Activated naive CD4-positive, alpha-beta T cell treated with anti-CD3 and anti-CD28 coated beads for 36 hours (primary cell): ENCODE measurements at regions of chr4 and their contacts with region 1.

Region 1: GRCh38 chr4:80173401-80173800 is 23.9 kb upstream of the PRDM8 start:
- DNase-seq: peak; percentile 79
- H3K4me3 Mint-ChIP-seq: no peak overlapping the region
- H3K27ac Mint-ChIP-seq: peak overlapping the region; percentile 46
- H3K4me1 Mint-ChIP-seq: peaks cover 51% of the 10 kb centered on the region
- H3K27me3 Mint-ChIP-seq: no peaks in the 10 kb centered on the region

Region 2: GRCh38 chr4:79528241-79528706 is 645.1 kb before region 1 on chr4:
- CTCF ChIA-PET with region 1: no interaction called
- intact Hi-C with region 1: loop called (anchors 5 kb)
- DNase-seq: peak; percentile 14
- H3K4me3 Mint-ChIP-seq: no peak overlapping the region
- H3K27ac Mint-ChIP-seq: no peak overlapping the region
- H3K4me1 Mint-ChIP-seq: peaks cover 11% of the 10 kb centered on the region
- H3K27me3 Mint-ChIP-seq: peaks cover 10% of the 10 kb centered on the region

Region 3: DNA sequence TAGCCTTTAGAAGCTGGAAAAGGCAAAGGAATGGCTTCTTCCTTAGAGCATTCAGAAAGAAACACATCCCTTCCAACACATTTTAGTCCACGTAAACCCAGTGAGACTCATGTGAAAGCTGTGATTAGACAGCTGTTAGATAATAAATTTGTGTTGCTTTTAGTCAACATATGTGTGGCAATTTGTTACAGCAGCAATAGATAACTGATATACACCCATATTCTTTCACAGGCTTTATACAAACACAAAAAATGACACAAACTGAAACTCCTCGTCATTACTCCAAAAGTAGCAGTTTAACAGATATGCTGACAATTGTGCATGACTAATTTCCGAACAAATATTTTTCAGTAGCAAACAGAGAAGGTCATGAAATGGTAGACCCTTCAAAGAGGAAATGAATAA is 165.7 kb before region 1 on chr4:
- CTCF ChIA-PET with region 1: no interaction called
- intact Hi-C with region 1: loop called (anchors 2 kb)
- DNase-seq: no peak
- H3K4me3 Mint-ChIP-seq: no peak overlapping the region
- H3K27ac Mint-ChIP-seq: no peak overlapping the region
- H3K4me1 Mint-ChIP-seq: peaks cover 38% of the 10 kb centered on the region
- H3K27me3 Mint-ChIP-seq: no peaks in the 10 kb centered on the region

Region 4: DNA sequence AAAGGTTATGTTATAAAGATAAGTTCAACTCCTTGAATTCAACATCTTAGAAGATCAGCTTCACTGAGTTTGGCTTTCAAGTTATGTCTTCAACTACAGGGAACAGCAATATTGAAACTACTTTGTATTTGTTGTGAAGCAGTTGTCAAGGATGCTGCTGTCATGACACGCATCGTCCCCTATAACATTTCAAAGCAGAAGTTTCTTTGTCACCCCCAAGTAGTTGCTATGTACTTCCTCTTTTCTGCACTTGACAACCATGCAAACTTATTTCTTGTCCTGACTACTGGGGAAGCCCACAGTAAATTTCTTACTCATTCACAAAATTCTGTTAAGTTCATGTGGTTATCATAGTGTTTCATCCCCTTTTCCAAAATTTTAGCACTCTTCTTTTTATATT is 114.7 kb before region 1 on chr4:
- CTCF ChIA-PET with region 1: no interaction called
- intact Hi-C with region 1: loop called (anchors 1 kb)
- DNase-seq: peak; percentile 67
- H3K4me3 Mint-ChIP-seq: peak overlapping the region; percentile 71
- H3K27ac Mint-ChIP-seq: peak overlapping the region; percentile 86
- H3K4me1 Mint-ChIP-seq: peaks cover 42% of the 10 kb centered on the region
- H3K27me3 Mint-ChIP-seq: no peaks in the 10 kb centered on the region

Region 5: DNA sequence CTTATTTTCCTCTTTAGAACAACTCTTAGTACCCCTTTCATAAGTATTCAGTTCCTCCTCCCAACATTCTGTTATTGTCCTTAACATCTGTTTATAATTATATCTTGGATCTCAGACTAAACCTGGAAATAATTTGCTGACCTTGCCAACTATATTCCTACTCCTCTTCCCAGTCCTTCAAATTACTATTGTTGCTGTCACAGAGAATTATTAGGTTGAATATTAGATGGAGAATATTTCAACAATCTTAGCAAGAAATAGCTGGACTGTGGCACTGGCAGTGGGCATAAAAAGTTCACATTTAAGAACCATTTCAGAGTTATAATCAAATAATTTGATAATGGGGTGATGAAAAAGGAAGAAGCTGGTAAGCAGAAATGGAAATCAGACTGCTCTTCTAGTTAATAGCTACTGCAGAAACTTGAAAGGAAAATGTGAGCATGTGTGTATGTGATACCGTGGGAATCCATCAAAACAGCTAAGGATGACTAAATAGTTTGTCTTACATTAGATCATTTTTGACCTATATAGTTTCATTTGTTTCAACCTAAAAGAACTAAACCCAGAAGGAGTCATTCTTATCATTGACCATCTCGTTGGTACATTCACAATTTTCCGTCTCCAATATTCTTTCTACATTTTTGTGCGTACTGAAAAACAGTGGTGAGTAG is 19.4 kb before region 1 on chr4:
- CTCF ChIA-PET with region 1: interaction called, 4 read pairs
- intact Hi-C with region 1: loop called (anchors 1 kb)
- DNase-seq: no peak
- H3K4me3 Mint-ChIP-seq: no peak overlapping the region
- H3K27ac Mint-ChIP-seq: no peak overlapping the region
- H3K4me1 Mint-ChIP-seq: peaks cover 21% of the 10 kb centered on the region
- H3K27me3 Mint-ChIP-seq: no peaks in the 10 kb centered on the region

Region 6: GRCh38 chr4:80202190-80202711 is 28.9 kb after region 1 on chr4:
- CTCF ChIA-PET with region 1: interaction called, 11 read pairs
- intact Hi-C with region 1: loop called (anchors 1 kb)
- DNase-seq: peak; percentile 79
- H3K4me3 Mint-ChIP-seq: peak overlapping the region; percentile 70
- H3K27ac Mint-ChIP-seq: no peak overlapping the region
- H3K4me1 Mint-ChIP-seq: peaks cover 20% of the 10 kb centered on the region
- H3K27me3 Mint-ChIP-seq: peaks cover 20% of the 10 kb centered on the region

Region 7: DNA sequence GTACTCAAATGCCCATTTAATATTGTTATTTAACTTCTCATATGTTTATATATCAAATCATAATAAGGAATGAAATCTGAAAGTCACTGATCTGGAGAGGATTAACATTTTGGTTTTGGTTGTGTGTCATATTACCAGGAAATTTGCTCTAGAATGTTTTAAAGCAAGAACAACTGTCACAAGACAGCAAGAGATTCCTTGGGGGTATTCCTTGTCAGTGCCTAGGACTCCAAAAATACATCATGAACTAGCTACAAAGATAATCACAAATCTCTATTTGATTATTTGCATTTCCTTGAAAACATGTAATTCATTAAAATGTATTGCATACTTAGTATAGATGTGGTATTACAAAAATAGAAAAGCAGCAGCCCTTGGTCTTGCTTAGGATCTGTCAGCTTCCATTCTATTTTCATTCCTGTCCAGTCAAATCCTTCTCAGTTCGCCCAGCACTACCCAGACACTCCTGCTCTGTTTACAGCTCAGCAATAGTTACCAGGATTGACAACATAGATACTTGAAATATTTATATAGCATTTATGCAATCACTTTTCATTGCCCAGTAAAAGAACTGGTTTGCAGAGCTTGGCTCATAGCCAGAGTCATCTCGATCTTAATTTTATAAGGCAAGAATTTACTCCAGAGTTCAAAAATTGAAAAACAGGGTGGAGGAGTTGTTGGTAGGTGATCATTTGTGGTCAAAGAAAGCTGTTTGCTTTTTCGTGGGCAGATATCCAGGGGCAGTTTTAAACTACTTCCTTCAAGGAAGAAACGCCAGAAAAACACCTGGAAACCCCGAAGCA is 847.9 kb after region 1 on chr4:
- CTCF ChIA-PET with region 1: no interaction called
- intact Hi-C with region 1: no loop called
- DNase-seq: no peak
- H3K4me3 Mint-ChIP-seq: no peak overlapping the region
- H3K27ac Mint-ChIP-seq: no peak overlapping the region
- H3K4me1 Mint-ChIP-seq: no peaks in the 10 kb centered on the region
- H3K27me3 Mint-ChIP-seq: peaks cover 14% of the 10 kb centered on the region